Gastrocnemius medialis (tissue), 4 donors: ENCODE measurements at regions of chr1 and their contacts with region 1.

Region 1: GRCh38 chr1:50929376-50929958 is 30.6 kb downstream of the FAF1 start:
- DNase-seq: no peak
- ATAC-seq: no peak
- H3K4me3 ChIP-seq: no peak overlapping the region
- H3K27ac ChIP-seq: no peak overlapping the region
- H3K4me1 ChIP-seq: peaks cover 3 to 7% of the 10 kb centered on the region in 2 donors
- H3K27me3 ChIP-seq: no peaks in the 10 kb centered on the region
- CTCF ChIP-seq: peak; percentile 44 to 67 (median 52)
- POLR2A ChIP-seq: no peak

Region 2: GRCh38 chr1:51000160-51000559 is 70.7 kb after region 1 on chr1:
- in situ Hi-C with region 1: no loop called
- intact Hi-C with region 1: loop called (anchors 10 kb)
- DNase-seq: no peak
- ATAC-seq: no peak
- H3K4me3 ChIP-seq: no peak overlapping the region
- H3K27ac ChIP-seq: no peak overlapping the region
- H3K4me1 ChIP-seq: no peaks in the 10 kb centered on the region
- H3K27me3 ChIP-seq: no peaks in the 10 kb centered on the region
- CTCF ChIP-seq: no peak
- POLR2A ChIP-seq: no peak

Region 3: DNA sequence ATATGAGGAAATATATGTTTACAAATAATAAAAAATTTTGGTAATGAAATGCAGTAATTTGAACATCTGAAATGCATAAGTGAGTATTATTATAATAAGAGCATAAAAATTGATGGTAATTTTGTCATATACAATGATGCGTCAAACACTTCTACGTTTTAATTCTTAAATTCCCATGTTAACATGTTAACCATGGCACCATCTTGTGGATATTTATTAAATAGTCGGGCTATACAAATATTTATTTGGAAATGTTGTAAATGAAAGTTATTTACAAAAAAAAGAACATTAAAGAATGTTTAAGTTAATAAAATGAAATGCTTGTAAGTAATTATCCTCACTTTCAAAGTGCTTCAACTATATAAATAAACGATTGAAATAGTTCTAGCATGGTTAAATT is 115.4 kb after region 1 on chr1:
- in situ Hi-C with region 1: loop called (anchors 5 to 25 kb)
- intact Hi-C with region 1: loop called (anchors 1 kb)
- DNase-seq: no peak
- ATAC-seq: no peak
- H3K4me3 ChIP-seq: no peak overlapping the region
- H3K27ac ChIP-seq: no peak overlapping the region
- H3K4me1 ChIP-seq: no peaks in the 10 kb centered on the region
- H3K27me3 ChIP-seq: no peaks in the 10 kb centered on the region
- CTCF ChIP-seq: peak; percentile 17 to 53 (median 48)
- POLR2A ChIP-seq: no peak

Region 4: DNA sequence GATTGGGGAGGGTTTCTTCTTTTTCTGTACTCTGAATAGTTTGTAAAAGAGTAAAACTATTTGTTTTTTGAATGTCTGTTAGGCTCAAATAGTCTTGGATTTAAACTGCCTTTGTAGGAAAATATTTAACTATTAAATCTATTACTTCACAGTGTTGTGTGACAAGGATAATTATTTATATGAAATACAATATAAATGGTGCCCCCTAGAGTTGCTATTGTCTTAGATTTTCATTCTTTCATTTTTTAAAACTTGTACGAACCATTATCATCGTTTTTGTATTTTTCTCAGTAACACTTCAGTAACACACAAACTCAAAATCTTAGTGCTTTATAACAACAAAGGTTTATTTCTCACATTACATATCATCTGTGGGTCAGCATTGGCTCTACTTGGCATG is 210.0 kb after region 1 on chr1:
- in situ Hi-C with region 1: no loop called
- intact Hi-C with region 1: no loop called
- DNase-seq: no peak
- ATAC-seq: no peak
- H3K4me3 ChIP-seq: no peak overlapping the region
- H3K27ac ChIP-seq: no peak overlapping the region
- H3K4me1 ChIP-seq: no peaks in the 10 kb centered on the region
- H3K27me3 ChIP-seq: no peaks in the 10 kb centered on the region
- CTCF ChIP-seq: no peak
- POLR2A ChIP-seq: no peak

Region 5: GRCh38 chr1:51192213-51192843 is 262.9 kb after region 1 on chr1:
- in situ Hi-C with region 1: loop called (anchors 10 to 25 kb)
- intact Hi-C with region 1: loop called (anchors 2 kb)
- DNase-seq: peak; percentile 8 to 24
- ATAC-seq: no peak
- H3K4me3 ChIP-seq: no peak overlapping the region
- H3K27ac ChIP-seq: no peak overlapping the region
- H3K4me1 ChIP-seq: no peaks in the 10 kb centered on the region
- H3K27me3 ChIP-seq: no peaks in the 10 kb centered on the region
- CTCF ChIP-seq: peak; percentile 33 to 81 (median 60)
- POLR2A ChIP-seq: no peak

Region 6: DNA sequence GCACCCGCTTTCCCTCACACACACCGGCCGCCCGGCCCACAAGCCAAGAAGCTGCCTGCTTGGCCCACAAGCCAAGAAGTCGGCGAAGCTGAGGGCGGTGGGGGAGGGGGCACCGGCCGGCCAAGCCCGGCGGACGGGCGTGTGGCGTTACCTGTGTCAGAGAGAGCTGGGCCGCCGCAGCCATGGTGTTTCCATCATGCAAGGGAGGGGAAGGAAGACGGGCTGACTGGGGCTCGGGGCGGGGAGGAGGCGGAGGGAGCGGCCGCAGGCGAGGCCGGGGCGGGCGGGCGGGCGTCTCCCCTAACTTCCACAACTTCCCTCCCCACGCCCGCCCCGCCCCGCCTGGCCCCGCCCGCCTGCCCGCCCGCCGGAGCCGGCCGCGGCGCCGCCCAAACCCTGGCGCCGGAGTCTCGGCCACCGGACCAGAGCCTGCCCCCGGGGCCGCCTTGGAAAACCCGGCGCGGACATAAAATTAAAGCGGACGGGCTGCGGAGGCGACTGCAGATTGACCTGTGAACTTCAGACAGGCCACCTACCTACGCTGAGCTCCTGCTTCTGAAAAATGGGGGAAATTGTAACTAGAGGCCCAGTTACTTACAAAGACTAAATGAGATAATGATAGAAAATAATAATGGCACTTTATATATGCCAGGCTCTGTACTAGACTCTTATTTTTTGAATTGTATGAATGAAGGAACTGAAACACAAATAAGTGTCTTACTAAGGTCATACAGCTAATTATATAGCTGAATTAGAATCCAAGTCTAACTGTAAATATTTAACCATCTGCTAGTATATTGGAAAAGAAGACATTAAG is 589.8 kb after region 1 on chr1 and contains the start of gene EPS15:
- in situ Hi-C with region 1: no loop called
- intact Hi-C with region 1: no loop called
- DNase-seq: peak; percentile 85 to 86
- ATAC-seq: peak; percentile 57 to 59
- H3K4me3 ChIP-seq: peak within 1 kb of the TSS; percentile 75 to 82 (median 80)
- H3K27ac ChIP-seq: peak within 1 kb of the TSS; percentile 95 to 97 (median 97)
- H3K4me1 ChIP-seq: peaks cover 32 to 34% of the 10 kb centered on the region in 2 donors
- H3K27me3 ChIP-seq: no peaks in the 10 kb centered on the region
- CTCF ChIP-seq: peak in 1 of 5 experiments; percentile 6
- POLR2A ChIP-seq: peak; percentile 61 to 76
- total RNA-seq, gene EPS15: 44.8 to 121 (median 71.0) TPM